ENCODE measurements at regions of chr10 and their contacts with region 1.

Region 1: GRCh38 chr10:118754720-118755480 is at the start of gene CACUL1:
- DNase-seq: peak; percentile 99
- H3K4me3 Mint-ChIP-seq: peak within 1 kb of the TSS; percentile 95
- H3K27ac Mint-ChIP-seq: peak within 1 kb of the TSS; percentile 82
- H3K4me1 Mint-ChIP-seq: peaks cover 36% of the 10 kb centered on the region
- H3K27me3 Mint-ChIP-seq: no peaks in the 10 kb centered on the region
- total RNA-seq, gene CACUL1: 18.4 to 19.2 TPM

Region 2: GRCh38 chr10:118046395-118047156 is 708.3 kb before region 1 on chr10 and contains the start of gene RAB11FIP2:
- CTCF ChIA-PET with region 1: no interaction called
- intact Hi-C with region 1: loop called (anchors 1 kb)
- DNase-seq: peak; percentile 97
- H3K4me3 Mint-ChIP-seq: peak within 1 kb of the TSS; percentile 86
- H3K27ac Mint-ChIP-seq: peak within 1 kb of the TSS; percentile 72
- H3K4me1 Mint-ChIP-seq: peaks cover 37% of the 10 kb centered on the region
- H3K27me3 Mint-ChIP-seq: no peaks in the 10 kb centered on the region
- total RNA-seq, gene RAB11FIP2: 9.9 to 11.6 TPM

Region 3: DNA sequence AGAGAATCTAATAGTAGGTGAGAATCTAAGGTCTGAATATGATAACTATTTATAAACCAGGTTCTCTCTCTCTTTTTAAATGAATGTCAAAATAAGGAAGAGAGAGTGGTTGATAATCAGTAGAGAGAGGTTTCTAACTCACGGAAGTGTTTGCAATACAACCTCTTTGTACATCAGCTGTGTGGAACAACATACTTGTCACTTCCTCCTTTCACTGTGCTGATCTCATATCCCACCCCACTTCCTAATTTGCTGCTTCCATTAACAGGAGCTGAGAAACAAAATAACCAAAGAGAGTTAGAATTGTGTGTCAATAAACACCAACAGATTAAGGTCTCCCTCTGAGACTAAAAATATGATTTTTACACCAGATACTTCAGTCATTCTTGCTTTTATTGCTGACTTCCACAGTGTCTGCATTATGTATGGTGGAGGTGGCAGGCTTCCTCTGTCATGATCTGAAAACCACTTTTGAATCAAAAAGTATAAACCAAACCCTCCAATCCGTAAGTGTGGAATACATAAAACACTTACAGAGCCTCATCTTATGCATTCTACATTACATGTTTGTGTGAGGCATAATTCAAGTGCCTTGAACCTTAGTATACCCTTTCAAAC is 25.1 kb before region 1 on chr10:
- CTCF ChIA-PET with region 1: interaction called, 3 read pairs
- intact Hi-C with region 1: loop called (anchors 1 kb)
- DNase-seq: no peak
- H3K4me3 Mint-ChIP-seq: no peak overlapping the region
- H3K27ac Mint-ChIP-seq: no peak overlapping the region
- H3K4me1 Mint-ChIP-seq: peaks cover 53% of the 10 kb centered on the region
- H3K27me3 Mint-ChIP-seq: no peaks in the 10 kb centered on the region

Region 4: GRCh38 chr10:119080521-119081260 is 325.8 kb after region 1 on chr10 and contains the start of gene EIF3A:
- CTCF ChIA-PET with region 1: no interaction called
- intact Hi-C with region 1: loop called (anchors 1 kb)
- DNase-seq: peak; percentile 90
- H3K4me3 Mint-ChIP-seq: peak within 1 kb of the TSS; percentile 95
- H3K27ac Mint-ChIP-seq: peak within 1 kb of the TSS; percentile 98
- H3K4me1 Mint-ChIP-seq: peaks cover 33% of the 10 kb centered on the region
- H3K27me3 Mint-ChIP-seq: no peaks in the 10 kb centered on the region
- total RNA-seq, gene EIF3A: 113 to 120 TPM

Region 5: DNA sequence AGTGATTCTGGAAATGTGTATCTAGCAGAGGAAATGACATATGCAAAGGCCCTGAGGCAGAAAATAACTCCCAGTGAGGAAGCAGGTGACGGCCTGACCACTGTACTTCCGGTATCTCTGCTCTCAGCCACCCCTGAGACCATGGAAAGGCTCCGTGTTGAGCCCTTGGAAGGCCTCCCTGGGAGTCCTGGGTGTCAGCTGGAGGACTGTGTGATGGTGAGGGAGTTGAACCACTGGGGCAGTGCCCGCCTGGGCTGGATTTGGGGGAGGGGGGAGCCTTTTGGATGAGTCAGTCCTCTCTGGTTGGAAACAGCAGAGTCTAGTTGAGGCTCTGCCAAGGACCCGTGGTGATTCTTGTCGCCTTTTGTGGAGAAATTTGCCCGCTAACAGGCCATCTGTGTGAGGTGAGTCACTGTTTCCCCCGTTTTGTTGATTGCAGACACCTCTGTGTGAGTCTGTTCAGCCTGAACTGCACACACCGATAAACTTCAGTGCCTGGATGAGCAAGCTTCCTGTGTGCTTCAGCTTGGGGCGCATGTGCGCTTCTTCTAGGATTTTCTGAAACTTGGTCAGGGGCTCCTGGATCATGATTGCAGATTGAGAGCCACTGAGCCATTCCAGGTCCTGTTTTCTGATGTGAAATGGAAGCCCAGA is 551.1 kb after region 1 on chr10:
- CTCF ChIA-PET with region 1: no interaction called
- intact Hi-C with region 1: loop called (anchors 10 kb)
- DNase-seq: peak; percentile 97
- H3K4me3 Mint-ChIP-seq: peak overlapping the region; percentile 68
- H3K27ac Mint-ChIP-seq: peak overlapping the region; percentile 99
- H3K4me1 Mint-ChIP-seq: peaks cover 74% of the 10 kb centered on the region
- H3K27me3 Mint-ChIP-seq: no peaks in the 10 kb centered on the region

Region 6: DNA sequence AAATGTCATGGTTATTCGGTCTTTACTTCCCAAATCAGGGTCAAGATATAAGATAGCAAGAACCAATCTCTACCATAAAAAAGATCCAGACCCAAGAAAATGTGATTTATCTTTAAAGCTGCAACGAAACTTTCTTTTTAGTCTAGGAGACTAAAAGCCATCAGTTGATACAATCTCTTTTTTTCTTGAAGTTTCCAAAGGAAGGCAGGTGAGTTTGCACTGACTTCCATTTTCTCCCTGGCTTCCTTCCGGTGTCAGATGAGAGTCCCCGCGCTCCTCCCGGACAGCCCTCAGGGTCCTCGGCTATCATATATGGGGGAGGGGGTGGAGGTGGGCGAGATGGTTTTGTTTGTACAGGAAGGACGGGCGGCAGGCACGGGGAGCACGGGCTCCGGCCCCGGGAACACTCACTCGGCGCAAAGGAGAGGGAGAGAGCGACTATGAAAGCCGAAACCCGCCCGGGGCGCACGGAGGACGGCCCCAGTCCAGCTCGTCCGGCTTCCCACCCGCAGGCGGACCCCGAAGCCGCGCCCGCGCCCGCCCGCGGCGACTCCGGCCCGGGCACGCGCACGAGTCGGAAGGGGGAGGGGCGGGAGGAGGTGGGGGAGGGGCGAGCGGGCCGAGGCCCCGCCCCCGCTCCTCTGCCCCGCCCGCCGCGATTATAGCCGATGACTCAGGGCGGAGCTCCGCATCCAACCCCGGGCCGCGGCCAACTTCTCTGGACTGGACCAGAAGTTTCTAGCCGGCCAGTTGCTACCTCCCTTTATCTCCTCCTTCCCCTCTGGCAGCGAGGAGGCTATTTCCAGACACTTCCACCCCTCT is 896.0 kb after region 1 on chr10 and contains the start of gene BAG3:
- CTCF ChIA-PET with region 1: no interaction called
- intact Hi-C with region 1: loop called (anchors 10 kb)
- DNase-seq: peak; percentile 82
- H3K4me3 Mint-ChIP-seq: peak within 1 kb of the TSS; percentile 97
- H3K27ac Mint-ChIP-seq: peak within 1 kb of the TSS; percentile 95
- H3K4me1 Mint-ChIP-seq: peaks cover 38% of the 10 kb centered on the region
- H3K27me3 Mint-ChIP-seq: no peaks in the 10 kb centered on the region
- total RNA-seq, gene BAG3: 20.9 to 24.3 TPM

Measured in activated naive CD4-positive, alpha-beta T cell treated with anti-CD3 and anti-CD28 coated beads for 36 hours (primary cell).